ENCODE measurements at regions of chrX and their contacts with region 1.

Region 1: DNA sequence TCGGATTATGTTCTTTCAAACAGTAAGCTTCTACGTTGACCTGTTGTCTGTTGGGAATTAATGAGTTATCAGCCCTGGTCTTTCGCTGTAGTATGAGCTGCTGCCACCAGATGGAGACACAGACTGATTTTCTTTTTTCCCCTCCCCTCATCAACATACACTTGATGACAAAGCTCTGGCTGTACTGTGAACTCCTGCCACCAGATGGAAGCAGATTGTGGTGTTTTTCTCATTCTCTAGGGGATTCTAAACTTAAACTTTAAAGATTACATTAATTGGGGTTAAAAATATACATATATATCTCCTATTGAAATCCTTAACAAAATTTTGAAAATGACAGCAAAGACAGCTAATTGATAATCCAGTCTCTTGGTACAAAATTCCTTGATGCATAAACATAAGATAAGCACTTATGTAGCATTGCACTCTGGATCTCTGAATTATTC is 44.8 kb downstream of the SMS start:
- DNase-seq: peak; percentile 82
- ATAC-seq: peak; percentile 89
- H3K4me3 ChIP-seq: no peak overlapping the region
- H3K27ac ChIP-seq: no peak overlapping the region
- H3K4me1 ChIP-seq: peaks cover 3% of the 10 kb centered on the region; the same call in 1 of the 2 replicates
- H3K27me3 ChIP-seq: no peaks in the 10 kb centered on the region
- CTCF ChIP-seq: peak; percentile 95

Region 2: DNA sequence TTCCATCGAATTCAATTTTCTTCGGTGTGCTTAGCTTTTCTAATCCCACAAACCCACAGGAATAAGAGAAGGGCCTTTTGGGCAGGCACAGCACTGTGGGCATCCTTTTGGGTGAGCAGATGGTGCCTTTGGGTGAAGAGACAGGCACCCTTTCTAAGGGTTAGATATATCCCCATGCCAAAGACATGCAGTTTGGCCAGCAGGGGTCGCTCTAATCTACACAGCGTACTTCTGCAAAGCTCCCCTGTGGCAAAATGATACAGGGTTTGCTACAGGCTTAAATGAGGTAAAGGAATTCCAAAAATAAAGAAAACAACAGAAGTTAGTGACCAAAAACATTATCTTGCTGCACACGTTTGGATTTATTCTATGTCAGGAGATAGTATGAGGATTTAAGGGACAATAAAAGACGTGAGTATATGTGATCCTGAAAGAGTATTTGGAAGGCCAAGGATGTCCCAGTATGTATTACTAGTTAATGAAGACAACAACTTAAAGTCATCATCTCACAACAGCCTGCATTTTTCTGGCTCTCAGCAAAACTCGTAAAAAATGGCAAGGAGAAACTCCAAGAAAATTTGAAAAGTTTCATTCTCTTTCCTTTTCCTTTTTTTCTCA is 96.2 kb after region 1 on chrX:
- CTCF ChIA-PET with region 1: interaction called, 3 read pairs
- POLR2A ChIA-PET with region 1: no interaction called
- intact Hi-C with region 1: loop called (anchors 10 kb)
- DNase-seq: peak; percentile 75
- ATAC-seq: peak; percentile 78
- H3K4me3 ChIP-seq: no peak overlapping the region
- H3K27ac ChIP-seq: no peak overlapping the region
- H3K4me1 ChIP-seq: no peaks in the 10 kb centered on the region
- H3K27me3 ChIP-seq: no peaks in the 10 kb centered on the region
- CTCF ChIP-seq: peak; percentile 88

Region 3: GRCh38 chrX:22122510-22122909 is 137.2 kb after region 1 on chrX:
- CTCF ChIA-PET with region 1: no interaction called
- POLR2A ChIA-PET with region 1: no interaction called
- intact Hi-C with region 1: no loop called
- DNase-seq: peak; percentile 59
- ATAC-seq: peak; percentile 56
- H3K4me3 ChIP-seq: no peak overlapping the region
- H3K27ac ChIP-seq: peak overlapping the region; percentile 26
- H3K4me1 ChIP-seq: peaks cover 39% of the 10 kb centered on the region
- H3K27me3 ChIP-seq: no peaks in the 10 kb centered on the region
- CTCF ChIP-seq: no peak

Region 4: DNA sequence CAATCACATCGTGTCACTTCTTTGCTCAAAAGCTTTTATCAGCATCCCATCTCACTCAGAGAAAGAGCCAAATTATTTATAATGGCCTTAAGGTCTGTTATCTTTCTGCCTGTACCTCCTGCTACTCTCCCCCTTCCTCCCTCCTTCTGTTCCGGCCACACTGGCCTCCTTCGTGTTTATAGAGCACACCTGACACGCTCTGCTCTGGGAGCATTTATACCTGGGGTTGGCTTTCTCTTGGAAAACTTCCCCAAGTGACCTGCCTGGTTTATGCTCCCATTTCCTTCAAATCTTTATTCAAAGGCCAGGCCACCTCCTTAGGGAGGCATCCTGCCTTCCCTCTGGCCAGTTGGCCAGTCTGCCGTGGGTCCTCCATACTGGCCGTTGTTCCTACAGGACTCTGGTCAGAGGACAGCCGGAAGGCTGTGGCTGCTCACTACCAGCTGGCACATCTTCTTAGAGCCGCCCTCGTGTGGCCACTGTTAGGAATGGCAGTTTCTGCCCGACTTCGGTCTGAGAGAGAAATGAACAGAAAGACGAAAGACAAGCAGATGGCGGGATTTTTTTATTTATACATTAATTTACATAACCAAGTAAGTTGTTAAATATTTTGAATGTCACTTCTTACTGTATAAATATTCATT is 207.2 kb after region 1 on chrX:
- CTCF ChIA-PET with region 1: interaction called, 5 read pairs
- POLR2A ChIA-PET with region 1: no interaction called
- intact Hi-C with region 1: loop called (anchors 1 kb)
- DNase-seq: peak; percentile 78
- ATAC-seq: peak; percentile 90
- H3K4me3 ChIP-seq: no peak overlapping the region
- H3K27ac ChIP-seq: no peak overlapping the region
- H3K4me1 ChIP-seq: 0 out of 2 replicates have a peak, but pooled peaks cover 3% of the 10 kb centered on the region
- H3K27me3 ChIP-seq: no peaks in the 10 kb centered on the region
- CTCF ChIP-seq: peak; percentile 80

Region 5: GRCh38 chrX:22748093-22748999 is 763.0 kb after region 1 on chrX:
- CTCF ChIA-PET with region 1: no interaction called
- POLR2A ChIA-PET with region 1: no interaction called
- intact Hi-C with region 1: loop called (anchors 5 kb)
- DNase-seq: peak; percentile 63
- ATAC-seq: peak; percentile 82
- H3K4me3 ChIP-seq: no peak overlapping the region
- H3K27ac ChIP-seq: no peak overlapping the region
- H3K4me1 ChIP-seq: no peaks in the 10 kb centered on the region
- H3K27me3 ChIP-seq: no peaks in the 10 kb centered on the region
- CTCF ChIP-seq: peak; percentile 78

Region 6: DNA sequence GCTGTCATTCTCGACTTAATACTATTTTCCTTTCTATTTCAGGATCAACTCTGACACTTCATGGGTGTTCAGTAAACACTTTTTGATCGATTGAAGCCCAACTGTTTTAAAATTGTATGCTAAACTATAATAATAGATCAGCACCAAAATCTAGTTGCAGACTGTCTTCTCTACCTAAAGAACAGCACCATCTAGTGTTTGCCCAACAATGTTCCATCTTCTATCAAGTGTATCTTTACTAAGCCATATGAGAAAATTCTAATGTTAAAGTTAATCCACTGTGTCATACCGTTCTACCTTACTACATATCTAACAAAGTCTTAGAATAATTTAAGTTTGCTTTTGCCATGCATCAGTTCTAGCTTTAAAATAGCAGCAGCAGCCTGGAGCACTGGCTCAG is 1568.9 kb after region 1 on chrX:
- CTCF ChIA-PET with region 1: no interaction called
- POLR2A ChIA-PET with region 1: no interaction called
- intact Hi-C with region 1: loop called (anchors 5 kb)
- DNase-seq: peak; percentile 68
- ATAC-seq: peak; percentile 37
- H3K4me3 ChIP-seq: no peak overlapping the region
- H3K27ac ChIP-seq: no peak overlapping the region
- H3K4me1 ChIP-seq: no peaks in the 10 kb centered on the region
- H3K27me3 ChIP-seq: peaks cover 41% of the 10 kb centered on the region; the same call in 1 of the 2 replicates
- CTCF ChIP-seq: peak; percentile 76

Region 7: DNA sequence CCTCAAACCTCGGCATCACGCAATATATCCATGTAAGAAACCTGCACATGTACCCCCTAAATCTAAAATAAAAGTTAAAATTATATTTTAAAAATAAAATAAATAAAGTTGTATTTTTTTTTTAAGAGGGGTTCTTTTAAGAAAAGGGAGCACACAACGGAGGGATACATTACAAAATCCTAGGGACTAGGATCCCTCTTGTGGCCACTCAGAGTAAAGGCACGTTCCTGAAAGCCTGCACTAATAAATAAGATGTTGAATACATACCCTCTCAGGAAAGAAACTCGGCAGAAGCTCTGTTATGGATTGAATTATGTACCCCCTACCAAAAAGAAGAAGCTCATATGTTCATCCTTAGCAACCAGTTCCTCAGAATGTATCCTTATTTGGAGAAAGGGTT is 1631.0 kb after region 1 on chrX:
- CTCF ChIA-PET with region 1: no interaction called
- POLR2A ChIA-PET with region 1: no interaction called
- intact Hi-C with region 1: loop called (anchors 2 kb)
- DNase-seq: peak; percentile 48
- ATAC-seq: no peak
- H3K4me3 ChIP-seq: no peak overlapping the region
- H3K27ac ChIP-seq: no peak overlapping the region
- H3K4me1 ChIP-seq: no peaks in the 10 kb centered on the region
- H3K27me3 ChIP-seq: no peaks in the 10 kb centered on the region; the same call in 1 of the 2 replicates
- CTCF ChIP-seq: peak; percentile 57; the same call in 1 of the 2 replicates

Region 8: DNA sequence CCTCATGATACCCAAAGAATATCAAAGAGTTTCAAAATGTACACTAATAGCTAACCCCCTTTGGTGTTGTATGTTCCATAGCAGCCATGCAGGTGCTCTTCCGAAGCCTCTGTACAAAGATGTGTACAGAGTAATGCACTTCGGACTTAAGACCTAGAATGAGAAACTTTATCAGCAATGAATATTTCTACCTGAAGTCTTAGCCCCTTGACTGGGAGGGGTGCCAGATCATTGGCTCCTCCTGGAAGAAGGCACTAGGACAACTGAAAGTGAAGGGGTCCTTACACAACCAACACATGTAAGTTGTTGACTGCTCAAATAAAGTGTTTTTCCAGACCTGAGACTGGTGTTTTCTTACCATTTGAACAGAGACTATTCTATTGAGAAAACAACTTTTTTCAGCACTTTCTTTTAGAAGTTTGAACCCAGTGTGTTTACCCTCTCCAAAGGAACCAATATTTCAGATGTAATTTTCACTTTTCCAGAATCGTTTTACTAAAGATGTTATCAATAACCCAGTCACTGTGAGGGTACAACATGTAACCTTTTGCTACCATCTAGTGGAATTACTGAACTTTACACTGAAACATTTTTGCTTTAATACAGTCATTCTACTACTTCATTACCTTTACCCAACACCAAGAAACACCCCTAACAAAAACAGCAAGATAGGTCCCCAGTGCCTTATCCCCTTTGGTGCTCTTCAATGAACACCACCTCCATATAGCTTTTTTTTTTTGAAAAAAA is 1648.7 kb after region 1 on chrX:
- CTCF ChIA-PET with region 1: no interaction called
- POLR2A ChIA-PET with region 1: no interaction called
- intact Hi-C with region 1: loop called (anchors 5 kb)
- DNase-seq: peak; percentile 47
- ATAC-seq: no peak
- H3K4me3 ChIP-seq: no peak overlapping the region
- H3K27ac ChIP-seq: no peak overlapping the region
- H3K4me1 ChIP-seq: no peaks in the 10 kb centered on the region
- H3K27me3 ChIP-seq: 0 out of 2 replicates have a peak, but pooled peaks cover 5% of the 10 kb centered on the region
- CTCF ChIP-seq: peak; percentile 58